CD4-positive, alpha-beta T cell (primary cell): ENCODE measurements at regions of chr5 and their contacts with region 1.

Region 1: GRCh38 chr5:151659001-151659754 is 27.5 kb downstream of the SPARC start:
- DNase-seq: peak; percentile 63 to 88 (median 72)
- ATAC-seq: peak; percentile 92
- H3K4me3 ChIP-seq: no peak overlapping the region
- H3K4me3 Mint-ChIP-seq: no peak overlapping the region
- H3K27ac ChIP-seq: no peak overlapping the region
- H3K27ac Mint-ChIP-seq: no peak overlapping the region
- H3K4me1 ChIP-seq: peaks cover 5% of the 10 kb centered on the region
- H3K4me1 Mint-ChIP-seq: peaks cover 14% of the 10 kb centered on the region
- H3K27me3 ChIP-seq: peaks cover 2 to 3% of the 10 kb centered on the region in 2 experiments
- H3K27me3 Mint-ChIP-seq: peaks cover 18% of the 10 kb centered on the region
- CTCF ChIP-seq: peak; percentile 88

Region 2: DNA sequence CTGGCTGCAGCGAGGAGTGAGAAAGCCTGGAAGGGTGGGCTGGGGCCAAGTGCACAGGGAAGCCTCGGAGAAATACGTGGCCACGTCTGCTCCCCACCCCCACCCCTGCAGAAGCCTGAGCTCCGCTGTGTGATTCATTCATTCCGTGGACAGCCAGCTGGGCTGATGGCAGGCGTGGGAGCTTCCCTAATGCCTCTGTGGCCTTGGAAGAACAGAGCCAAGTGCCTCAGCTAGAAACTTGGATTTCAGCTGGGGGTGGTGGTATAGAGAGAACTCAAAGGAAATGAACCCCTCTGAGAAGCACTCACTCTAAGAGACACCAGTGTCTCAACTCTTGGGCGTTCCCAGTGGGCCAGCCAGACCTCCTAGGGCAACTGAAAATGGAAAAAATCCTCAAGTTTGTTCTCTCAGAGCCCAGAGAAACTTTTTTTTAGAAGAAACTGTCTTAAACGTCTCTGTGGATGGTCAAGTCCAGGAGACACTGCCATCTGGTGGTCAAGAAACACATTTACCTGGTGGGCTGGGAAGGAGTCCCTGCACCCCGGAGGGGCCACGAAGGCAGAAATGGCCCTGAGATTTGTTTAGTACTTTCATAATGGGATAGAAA is 81.3 kb after region 1 on chr5:
- CTCF ChIA-PET with region 1: interaction called, 8 read pairs
- POLR2A ChIA-PET with region 1: no interaction called
- intact Hi-C with region 1: loop called (anchors 1 to 2 kb)
- DNase-seq: peak in 10 of 14 experiments; percentile 16 to 79 (median 32)
- ATAC-seq: peak; percentile 82
- H3K4me3 ChIP-seq: no peak overlapping the region
- H3K4me3 Mint-ChIP-seq: no peak overlapping the region
- H3K27ac ChIP-seq: no peak overlapping the region
- H3K27ac Mint-ChIP-seq: no peak overlapping the region
- H3K4me1 ChIP-seq: peaks cover 17% of the 10 kb centered on the region
- H3K4me1 Mint-ChIP-seq: peaks cover 15% of the 10 kb centered on the region
- H3K27me3 ChIP-seq: no peaks in the 10 kb centered on the region
- H3K27me3 Mint-ChIP-seq: no peaks in the 10 kb centered on the region
- CTCF ChIP-seq: peak; percentile 89

Region 3: GRCh38 chr5:152142840-152143469 is 483.8 kb after region 1 on chr5:
- CTCF ChIA-PET with region 1: interaction called, 9 read pairs
- POLR2A ChIA-PET with region 1: no interaction called
- intact Hi-C with region 1: loop called (anchors 1 to 2 kb)
- DNase-seq: peak; percentile 41 to 79 (median 62)
- ATAC-seq: peak; percentile 56
- H3K4me3 ChIP-seq: no peak overlapping the region
- H3K4me3 Mint-ChIP-seq: no peak overlapping the region
- H3K27ac ChIP-seq: no peak overlapping the region
- H3K27ac Mint-ChIP-seq: no peak overlapping the region
- H3K4me1 ChIP-seq: no peaks in the 10 kb centered on the region
- H3K4me1 Mint-ChIP-seq: no peaks in the 10 kb centered on the region
- H3K27me3 ChIP-seq: no peaks in the 10 kb centered on the region
- H3K27me3 Mint-ChIP-seq: no peaks in the 10 kb centered on the region
- CTCF ChIP-seq: peak; percentile 81

Region 4: DNA sequence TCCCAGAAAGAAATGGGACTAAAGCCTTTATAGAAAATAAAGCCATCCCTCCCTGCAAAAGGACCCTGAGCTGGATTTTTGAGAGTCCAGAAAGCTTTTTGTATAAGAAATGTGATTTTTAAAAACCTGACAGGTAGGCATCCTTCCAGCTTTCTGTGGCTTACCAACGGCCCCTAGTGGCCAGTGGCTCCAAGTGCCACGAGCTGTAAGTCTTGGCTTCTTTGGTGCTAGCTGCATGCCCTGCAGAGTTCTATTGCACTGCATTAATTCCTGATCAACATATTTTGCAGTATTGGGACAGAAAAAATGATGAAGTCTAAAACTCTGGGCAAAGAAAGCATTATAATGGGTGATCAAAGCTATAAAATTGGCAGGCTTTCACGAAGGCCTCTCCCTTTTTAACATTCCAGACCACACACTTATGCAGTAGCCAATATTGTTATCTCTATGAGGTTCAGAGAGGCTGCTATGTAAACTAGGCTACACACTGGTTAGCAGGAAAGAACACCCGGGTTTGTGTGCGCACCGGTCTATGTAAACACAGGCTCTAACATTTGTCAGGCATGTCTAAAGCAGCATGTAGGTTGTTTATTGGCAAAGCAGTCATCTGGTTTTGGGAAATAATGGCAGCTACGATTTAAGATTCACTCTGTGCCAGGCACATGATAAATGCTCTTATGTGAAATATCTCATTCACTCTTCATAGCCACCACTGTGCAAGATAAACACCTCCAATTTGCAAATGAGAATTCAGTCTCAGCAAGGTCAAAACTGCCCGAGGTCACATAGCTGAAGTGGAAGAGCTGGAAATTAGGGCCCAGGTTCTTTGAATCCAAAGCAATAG is 690.7 kb after region 1 on chr5:
- CTCF ChIA-PET with region 1: interaction called, 3 read pairs
- POLR2A ChIA-PET with region 1: no interaction called
- intact Hi-C with region 1: loop called (anchors 5 kb)
- DNase-seq: peak in 8 of 14 experiments; percentile 1 to 41 (median 14)
- ATAC-seq: no peak
- H3K4me3 ChIP-seq: no peak overlapping the region
- H3K4me3 Mint-ChIP-seq: no peak overlapping the region
- H3K27ac ChIP-seq: no peak overlapping the region
- H3K27ac Mint-ChIP-seq: no peak overlapping the region
- H3K4me1 ChIP-seq: no peaks in the 10 kb centered on the region
- H3K4me1 Mint-ChIP-seq: no peaks in the 10 kb centered on the region
- H3K27me3 ChIP-seq: peaks cover 0 to 4% of the 10 kb centered on the region in 2 experiments
- H3K27me3 Mint-ChIP-seq: no peaks in the 10 kb centered on the region
- CTCF ChIP-seq: peak; percentile 43

Region 5: DNA sequence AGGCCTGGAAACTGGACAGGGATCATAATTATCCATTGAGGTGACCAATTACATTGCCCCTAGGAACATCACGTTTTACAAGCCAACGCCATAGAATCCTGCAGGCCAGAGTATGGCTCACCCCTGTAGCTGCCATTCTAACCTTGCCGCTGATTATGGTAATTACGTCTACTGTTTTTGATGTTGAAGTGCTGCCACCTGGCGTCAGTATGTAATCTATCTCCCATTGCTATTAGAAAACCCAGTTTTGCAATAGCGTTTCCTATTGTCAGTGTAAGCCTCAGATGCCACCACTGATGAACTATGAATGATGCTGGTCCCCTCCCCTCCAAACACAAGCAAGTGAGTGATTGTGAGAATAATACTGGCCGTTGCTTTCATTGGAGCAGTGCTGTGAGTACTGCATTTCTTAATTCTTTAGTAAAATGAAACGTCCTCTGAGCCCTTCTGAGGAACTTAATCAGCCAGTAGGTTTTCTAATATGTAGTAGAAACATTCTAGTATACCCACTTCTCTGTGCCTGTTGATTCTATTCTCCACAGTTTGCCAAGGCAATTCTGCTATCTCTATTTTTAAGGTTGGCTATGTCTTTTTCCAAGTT is 846.4 kb after region 1 on chr5:
- CTCF ChIA-PET with region 1: no interaction called
- POLR2A ChIA-PET with region 1: no interaction called
- intact Hi-C with region 1: loop called (anchors 5 kb)
- DNase-seq: peak in 9 of 14 experiments; percentile 6 to 63 (median 21)
- ATAC-seq: no peak
- H3K4me3 ChIP-seq: no peak overlapping the region
- H3K4me3 Mint-ChIP-seq: no peak overlapping the region
- H3K27ac ChIP-seq: no peak overlapping the region
- H3K27ac Mint-ChIP-seq: no peak overlapping the region
- H3K4me1 ChIP-seq: peaks cover 4% of the 10 kb centered on the region
- H3K4me1 Mint-ChIP-seq: no peaks in the 10 kb centered on the region
- H3K27me3 ChIP-seq: peaks cover 0 to 6% of the 10 kb centered on the region in 2 experiments
- H3K27me3 Mint-ChIP-seq: peaks cover 47% of the 10 kb centered on the region
- CTCF ChIP-seq: peak; percentile 39